Activated naive CD4-positive, alpha-beta T cell treated with anti-CD3 and anti-CD28 coated beads, Interleukin-2, amount 10 ng/mL, durations not matched to agents 7 days and 5 days (primary cell): ENCODE measurements at regions of chr12 and their contacts with region 1.

Region 1: DNA sequence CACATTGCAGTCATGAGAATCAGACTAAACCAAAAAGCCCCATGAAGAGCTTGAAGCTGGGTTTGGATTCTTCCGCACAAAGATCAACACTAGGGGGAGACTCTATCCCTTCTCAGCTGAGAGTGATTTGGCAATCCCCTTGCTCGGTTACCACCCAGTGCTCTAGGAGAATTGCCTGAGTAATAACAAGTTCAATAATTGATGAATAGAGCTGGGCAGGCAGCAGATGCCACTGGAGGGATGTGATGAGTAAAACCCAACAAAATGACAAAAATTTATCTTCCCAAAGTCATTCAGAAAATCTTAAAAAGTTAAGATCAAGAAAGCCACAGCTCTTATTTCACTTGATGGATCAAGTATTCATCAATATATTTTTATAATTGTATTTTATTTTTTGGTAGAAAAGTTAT is 185.6 kb upstream of the ARID2 start:
- DNase-seq: peak; percentile 64
- H3K4me3 Mint-ChIP-seq: no peak overlapping the region
- H3K27ac Mint-ChIP-seq: no peak overlapping the region
- H3K4me1 Mint-ChIP-seq: peaks cover 4% of the 10 kb centered on the region
- H3K27me3 Mint-ChIP-seq: peaks cover 27% of the 10 kb centered on the region

Region 2: DNA sequence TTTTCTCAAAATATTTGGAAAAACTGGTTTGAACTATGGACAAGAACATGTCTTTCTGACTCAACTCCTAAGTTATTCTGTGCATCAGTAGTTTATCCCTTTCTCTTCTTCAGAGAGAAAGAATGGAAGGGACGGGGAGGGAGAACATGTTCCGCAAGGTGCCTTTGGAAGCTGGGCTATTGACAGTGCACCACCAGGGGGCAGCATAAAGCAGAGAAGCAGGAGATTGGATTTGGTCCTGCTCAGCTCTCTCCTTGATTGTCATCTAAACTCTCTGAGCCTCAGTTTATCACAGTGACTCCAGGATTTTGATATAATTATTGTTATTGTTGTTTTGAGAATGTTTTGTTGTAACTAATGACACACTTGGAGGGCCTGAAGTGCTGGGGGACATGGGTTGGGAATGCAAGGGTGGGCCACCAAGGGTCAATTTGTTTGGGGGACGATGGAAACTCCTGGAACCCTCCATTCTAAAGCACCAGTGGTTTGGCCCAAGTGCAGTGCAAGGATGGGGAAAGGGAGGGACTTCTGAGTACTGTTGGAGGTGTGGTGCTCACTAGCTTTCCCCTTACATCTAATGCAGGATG is 373.4 kb before region 1 on chr12:
- CTCF ChIA-PET with region 1: interaction called, 10 read pairs
- DNase-seq: peak; percentile 87
- H3K4me3 Mint-ChIP-seq: no peak overlapping the region
- H3K27ac Mint-ChIP-seq: no peak overlapping the region
- H3K4me1 Mint-ChIP-seq: no peaks in the 10 kb centered on the region
- H3K27me3 Mint-ChIP-seq: no peaks in the 10 kb centered on the region

Region 3: DNA sequence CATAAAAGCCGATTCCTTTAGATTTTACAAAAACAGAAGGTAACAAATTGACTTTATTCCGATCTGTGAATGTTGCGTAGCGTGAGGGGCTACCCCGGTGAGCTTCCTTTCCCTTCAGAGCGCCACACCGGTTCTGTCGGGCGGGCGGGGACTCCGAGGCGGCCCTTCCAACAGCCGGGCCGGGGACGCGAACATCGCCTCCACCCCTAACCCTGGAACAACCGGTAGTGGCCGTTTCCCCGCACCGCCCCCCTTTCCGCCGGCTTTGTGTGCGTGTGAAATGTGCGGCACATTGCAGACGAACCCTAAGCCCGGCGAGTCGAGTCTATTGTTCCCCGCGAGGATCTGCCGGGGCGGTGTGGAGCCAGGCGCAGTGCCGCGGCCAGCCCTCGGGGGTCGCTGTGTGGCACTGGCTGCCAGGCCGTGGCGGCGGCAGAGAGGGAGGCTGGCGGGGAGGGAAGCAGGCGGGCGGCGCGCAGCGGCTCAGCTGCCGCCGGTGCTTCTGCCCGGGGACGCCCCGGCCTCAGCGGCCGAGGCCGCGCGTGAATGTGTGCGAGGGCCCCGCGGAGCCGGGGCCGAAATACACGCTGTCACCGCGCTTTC is 184.8 kb after region 1 on chr12:
- CTCF ChIA-PET with region 1: interaction called, 107 read pairs
- DNase-seq: peak; percentile 98
- H3K4me3 Mint-ChIP-seq: peak overlapping the region; percentile 100
- H3K27ac Mint-ChIP-seq: peak overlapping the region; percentile 98
- H3K4me1 Mint-ChIP-seq: peaks cover 22% of the 10 kb centered on the region
- H3K27me3 Mint-ChIP-seq: no peaks in the 10 kb centered on the region

Region 4: GRCh38 chr12:45760333-45760732 is 216.4 kb after region 1 on chr12:
- CTCF ChIA-PET with region 1: interaction called, 10 read pairs
- DNase-seq: no peak
- H3K4me3 Mint-ChIP-seq: no peak overlapping the region
- H3K27ac Mint-ChIP-seq: no peak overlapping the region
- H3K4me1 Mint-ChIP-seq: no peaks in the 10 kb centered on the region
- H3K27me3 Mint-ChIP-seq: no peaks in the 10 kb centered on the region

Region 5: DNA sequence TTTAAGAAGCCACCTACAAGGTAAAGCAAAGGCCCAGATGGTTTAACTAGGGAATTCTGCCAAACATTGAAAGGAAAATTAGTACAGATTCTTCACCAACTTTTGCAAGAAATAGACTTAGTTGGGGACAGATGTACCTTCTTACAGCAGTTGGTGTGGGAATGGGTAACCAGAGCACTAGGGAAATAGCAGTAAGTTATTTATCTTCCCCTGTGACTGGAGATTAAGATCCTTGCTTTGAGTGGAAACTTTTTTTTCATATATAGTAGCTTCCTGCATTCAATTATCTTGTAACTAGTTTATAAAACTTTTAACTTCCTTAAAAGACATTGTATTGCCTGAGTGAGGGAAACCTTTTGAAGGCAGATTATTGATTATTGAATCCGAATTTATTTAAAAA is 229.8 kb after region 1 on chr12:
- CTCF ChIA-PET with region 1: interaction called, 10 read pairs
- DNase-seq: no peak
- H3K4me3 Mint-ChIP-seq: no peak overlapping the region
- H3K27ac Mint-ChIP-seq: no peak overlapping the region
- H3K4me1 Mint-ChIP-seq: peaks cover 5% of the 10 kb centered on the region
- H3K27me3 Mint-ChIP-seq: no peaks in the 10 kb centered on the region